Transverse colon (tissue), 4 donors: ENCODE measurements at regions of chr1 and their contacts with region 1.

Region 1: DNA sequence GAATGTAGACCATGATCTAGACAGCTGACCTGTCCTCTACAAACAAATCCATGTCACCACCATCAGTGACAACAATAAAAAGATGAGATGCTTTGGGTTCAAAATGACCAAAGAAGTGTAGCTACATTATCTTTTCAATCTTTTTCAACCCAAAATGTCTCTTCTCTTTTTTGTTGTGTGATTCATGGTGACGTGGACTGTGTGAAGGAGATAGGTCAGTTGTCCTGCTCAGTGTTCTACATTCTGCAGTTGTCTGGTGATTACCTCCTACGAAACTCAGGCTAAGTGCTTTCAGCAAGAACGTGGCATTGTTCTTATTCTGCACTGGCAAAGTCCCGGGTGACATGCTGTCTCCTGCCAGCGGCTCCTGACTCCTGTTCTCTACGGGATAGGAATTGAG is 73.1 kb downstream of the PRKAB2 start:
- DNase-seq: no peak
- H3K4me3 ChIP-seq: no peak overlapping the region
- H3K27ac ChIP-seq: no peak overlapping the region
- H3K4me1 ChIP-seq: no peaks in the 10 kb centered on the region
- H3K27me3 ChIP-seq: no peaks in the 10 kb centered on the region
- CTCF ChIP-seq: no peak
- EP300 ChIP-seq: no peak
- POLR2A ChIP-seq: no peak

Region 2: DNA sequence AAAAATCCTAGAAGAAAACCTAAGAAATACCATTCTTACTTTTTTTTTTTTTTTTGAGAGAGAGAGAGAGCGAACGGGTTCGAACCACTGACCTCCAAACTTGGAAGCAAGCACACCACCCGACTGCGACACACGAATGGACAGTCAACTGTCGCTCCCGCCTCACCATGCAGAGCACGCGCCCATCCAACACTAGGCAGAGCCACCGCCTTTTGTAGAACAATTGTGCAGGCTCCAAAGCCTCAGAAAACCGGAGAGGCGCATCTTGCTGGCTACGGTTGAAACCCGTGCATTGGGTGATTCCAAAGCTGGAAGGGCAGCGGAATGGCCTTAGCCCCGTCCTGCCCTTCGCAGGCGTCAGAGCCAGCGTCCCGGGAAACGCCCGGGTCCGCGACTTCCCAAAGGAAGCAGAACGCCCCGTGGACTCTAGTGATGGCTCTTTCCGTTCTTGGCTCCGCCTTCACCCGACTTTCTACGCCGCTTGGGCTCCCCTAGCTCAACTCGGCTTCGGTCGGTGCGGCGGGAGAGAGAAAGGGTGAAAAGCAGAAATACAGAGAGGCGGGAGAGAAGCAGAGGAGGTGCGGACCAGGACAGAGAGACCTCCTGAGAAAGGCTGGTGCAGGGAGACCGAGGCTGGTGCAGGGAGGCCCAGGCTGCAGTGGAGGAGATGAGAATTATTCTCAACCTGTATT is 26.7 kb before region 1 on chr1:
- in situ Hi-C with region 1: no loop called
- intact Hi-C with region 1: loop called (anchors 1 kb)
- DNase-seq: no peak
- H3K4me3 ChIP-seq: peak overlapping the region in 3 of 4 donors; percentile 16 to 33 (median 20)
- H3K27ac ChIP-seq: no peak overlapping the region
- H3K4me1 ChIP-seq: peaks cover 0 to 8% (median 4%) of the 10 kb centered on the region in 4 donors
- H3K27me3 ChIP-seq: peaks cover 76% of the 10 kb centered on the region
- CTCF ChIP-seq: no peak
- EP300 ChIP-seq: no peak
- POLR2A ChIP-seq: no peak

Region 3: DNA sequence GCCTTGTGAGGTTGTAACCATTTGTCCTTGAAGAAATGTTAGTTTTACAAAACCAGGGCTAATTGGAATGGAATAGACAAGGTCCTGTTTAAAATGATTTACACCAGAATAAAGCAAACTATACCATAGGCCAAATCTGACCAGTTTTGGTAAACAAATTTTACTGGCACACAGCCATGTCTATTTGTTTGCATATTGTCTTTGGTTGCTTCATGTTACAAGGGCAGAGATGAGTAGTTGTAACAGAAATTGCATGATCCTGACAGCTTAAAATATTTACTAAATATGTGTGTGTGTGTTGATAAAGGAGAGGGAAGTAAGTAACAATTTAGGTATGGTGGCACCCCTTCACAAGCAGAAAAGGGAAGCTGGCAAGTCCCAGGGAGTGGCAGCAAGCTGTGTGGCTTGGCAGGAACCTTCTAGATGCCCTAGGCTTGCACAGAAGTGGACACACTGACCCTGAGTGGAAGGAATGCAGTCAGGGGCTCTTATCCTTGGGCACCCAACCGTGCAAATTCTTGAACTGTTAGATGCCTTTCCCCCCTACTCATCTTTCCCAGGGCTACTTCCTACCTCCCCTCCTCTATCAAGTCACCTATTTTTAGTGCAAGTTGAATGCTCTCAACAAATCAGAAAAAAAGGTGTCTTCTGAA is 552.1 kb after region 1 on chr1:
- in situ Hi-C with region 1: no loop called
- intact Hi-C with region 1: no loop called
- DNase-seq: no peak
- H3K4me3 ChIP-seq: no peak overlapping the region
- H3K27ac ChIP-seq: no peak overlapping the region
- H3K4me1 ChIP-seq: no peaks in the 10 kb centered on the region
- H3K27me3 ChIP-seq: no peaks in the 10 kb centered on the region
- CTCF ChIP-seq: no peak
- EP300 ChIP-seq: no peak
- POLR2A ChIP-seq: no peak